Activated CD8-positive, alpha-beta T cell treated with anti-CD3 and anti-CD28 coated beads for 36 hours (primary cell): ENCODE measurements at regions of chr17 and their contacts with region 1.

Region 1: GRCh38 chr17:17859909-17860765 is 23.4 kb upstream of the SREBF1 start:
- DNase-seq: peak; percentile 74
- ATAC-seq: peak; percentile 91
- H3K4me3 Mint-ChIP-seq: no peak overlapping the region
- H3K27ac Mint-ChIP-seq: no peak overlapping the region
- H3K4me1 Mint-ChIP-seq: peaks cover 30% of the 10 kb centered on the region
- H3K27me3 Mint-ChIP-seq: no peaks in the 10 kb centered on the region
- CTCF ChIP-seq: peak; percentile 97

Region 2: GRCh38 chr17:17681187-17681848 is 178.8 kb before region 1 on chr17 and contains the start of gene RAI1:
- CTCF ChIA-PET with region 1: interaction called, 12 read pairs
- POLR2A ChIA-PET with region 1: interaction called, 6 read pairs
- intact Hi-C with region 1: loop called (anchors 5 kb)
- DNase-seq: peak; percentile 73
- ATAC-seq: peak; percentile 65
- H3K4me3 Mint-ChIP-seq: peak within 1 kb of the TSS; percentile 80
- H3K27ac Mint-ChIP-seq: peak within 1 kb of the TSS; percentile 91
- H3K4me1 Mint-ChIP-seq: peaks cover 37% of the 10 kb centered on the region
- H3K27me3 Mint-ChIP-seq: no peaks in the 10 kb centered on the region
- CTCF ChIP-seq: peak; percentile 60
- total RNA-seq, gene RAI1: 18.1 to 20.3 TPM

Region 3: GRCh38 chr17:17812211-17813057 is 47.7 kb before region 1 on chr17:
- CTCF ChIA-PET with region 1: interaction called, 104 read pairs
- POLR2A ChIA-PET with region 1: interaction called, 13 read pairs
- intact Hi-C with region 1: no loop called
- DNase-seq: peak; percentile 74
- ATAC-seq: peak; percentile 59
- H3K4me3 Mint-ChIP-seq: no peak overlapping the region
- H3K27ac Mint-ChIP-seq: peak overlapping the region; percentile 75
- H3K4me1 Mint-ChIP-seq: peaks cover 22% of the 10 kb centered on the region
- H3K27me3 Mint-ChIP-seq: no peaks in the 10 kb centered on the region
- CTCF ChIP-seq: peak; percentile 99

Region 4: GRCh38 chr17:17823433-17824118 is 36.6 kb before region 1 on chr17:
- CTCF ChIA-PET with region 1: interaction called, 11 read pairs
- POLR2A ChIA-PET with region 1: interaction called, 617 read pairs
- intact Hi-C with region 1: no loop called
- DNase-seq: peak; percentile 86
- ATAC-seq: peak; percentile 77
- H3K4me3 Mint-ChIP-seq: peak overlapping the region; percentile 75
- H3K27ac Mint-ChIP-seq: peak overlapping the region; percentile 97
- H3K4me1 Mint-ChIP-seq: peaks cover 95% of the 10 kb centered on the region
- H3K27me3 Mint-ChIP-seq: no peaks in the 10 kb centered on the region
- CTCF ChIP-seq: no peak

Region 5: DNA sequence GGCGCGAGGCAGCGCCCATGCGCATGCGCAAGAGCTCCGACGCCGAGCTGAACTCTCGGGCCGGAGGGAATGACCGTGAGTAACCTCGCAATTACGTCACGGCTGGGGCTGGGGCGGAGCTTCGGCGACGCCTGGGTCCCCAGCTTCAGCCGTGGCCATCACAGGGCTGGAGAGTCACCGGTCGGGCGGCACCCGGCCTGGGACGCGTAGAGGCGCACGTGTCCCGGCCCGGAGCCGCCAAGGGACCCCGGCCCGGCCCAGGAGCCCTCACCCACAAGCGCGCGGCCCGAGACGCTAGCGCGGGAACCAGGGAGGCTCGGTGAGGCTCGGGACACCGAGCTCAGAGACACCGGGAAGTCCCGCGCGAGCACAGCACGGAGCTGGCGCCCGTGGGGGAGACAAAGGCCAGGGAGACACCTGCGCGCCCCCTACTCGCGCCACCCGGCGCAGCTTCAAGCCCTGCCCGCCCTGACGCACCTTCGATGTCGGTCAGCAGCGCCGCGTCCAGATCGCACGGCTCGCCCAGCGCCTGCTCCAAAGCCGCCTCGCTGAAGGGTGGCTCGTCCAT is 23.8 kb before region 1 on chr17:
- CTCF ChIA-PET with region 1: interaction called, 34 read pairs
- POLR2A ChIA-PET with region 1: interaction called, 617 read pairs
- intact Hi-C with region 1: no loop called
- DNase-seq: peak; percentile 98
- ATAC-seq: peak; percentile 72
- H3K4me3 Mint-ChIP-seq: peak overlapping the region; percentile 92
- H3K27ac Mint-ChIP-seq: peak overlapping the region; percentile 96
- H3K4me1 Mint-ChIP-seq: peaks cover 69% of the 10 kb centered on the region
- H3K27me3 Mint-ChIP-seq: no peaks in the 10 kb centered on the region
- CTCF ChIP-seq: no peak

Region 6: GRCh38 chr17:17886226-17886625 is 26.1 kb after region 1 on chr17:
- CTCF ChIA-PET with region 1: no interaction called
- POLR2A ChIA-PET with region 1: no interaction called
- intact Hi-C with region 1: no loop called
- DNase-seq: no peak
- ATAC-seq: no peak
- H3K4me3 Mint-ChIP-seq: no peak overlapping the region
- H3K27ac Mint-ChIP-seq: no peak overlapping the region
- H3K4me1 Mint-ChIP-seq: peaks cover 2% of the 10 kb centered on the region
- H3K27me3 Mint-ChIP-seq: no peaks in the 10 kb centered on the region
- CTCF ChIP-seq: no peak